Panc1 (cell line): ENCODE measurements at regions of chr18 and their contacts with region 1.

Region 1: DNA sequence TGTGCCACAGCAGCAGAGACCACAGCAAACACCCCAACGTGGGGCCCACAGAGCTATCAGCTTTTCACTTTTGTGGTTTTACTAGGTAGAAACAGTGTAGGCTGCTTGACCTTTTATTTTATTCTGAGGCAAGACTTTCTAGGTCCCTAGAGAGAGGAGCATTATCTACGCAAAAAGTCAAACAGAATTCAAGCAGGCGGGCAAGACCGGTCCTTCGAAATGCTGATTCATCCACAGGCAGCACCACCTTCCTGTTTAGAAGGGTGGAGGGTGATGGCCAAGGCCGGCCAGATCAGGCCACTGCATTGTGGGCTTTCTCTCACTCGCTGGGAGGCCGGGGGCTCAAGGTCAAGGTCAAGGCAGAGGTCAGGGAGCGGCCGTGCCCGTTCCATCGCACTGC is 573.0 kb downstream of the GALR1 start:
- DNase-seq: no peak
- ATAC-seq: no peak
- H3K4me3 ChIP-seq: no peak overlapping the region
- H3K27ac ChIP-seq: no peak overlapping the region
- H3K4me1 ChIP-seq: no peaks in the 10 kb centered on the region
- H3K27me3 ChIP-seq: no peaks in the 10 kb centered on the region
- CTCF ChIP-seq: no peak

Region 2: GRCh38 chr18:77249569-77250500 is 572.8 kb before region 1 on chr18 and contains the start of gene GALR1:
- CTCF ChIA-PET with region 1: no interaction called
- POLR2A ChIA-PET with region 1: no interaction called
- in situ Hi-C with region 1: no loop called
- intact Hi-C with region 1: no loop called
- DNase-seq: no peak
- ATAC-seq: peak; percentile 55
- H3K4me3 ChIP-seq: peak within 1 kb of the TSS; percentile 24 to 50
- H3K27ac ChIP-seq: no peak within 1 kb of the TSS
- H3K4me1 ChIP-seq: peaks cover 3% of the 10 kb centered on the region; the same call in 1 of the 2 replicates
- H3K27me3 ChIP-seq: peaks cover 10% of the 10 kb centered on the region
- CTCF ChIP-seq: no peak
- total RNA-seq, gene GALR1: not detected

Region 3: DNA sequence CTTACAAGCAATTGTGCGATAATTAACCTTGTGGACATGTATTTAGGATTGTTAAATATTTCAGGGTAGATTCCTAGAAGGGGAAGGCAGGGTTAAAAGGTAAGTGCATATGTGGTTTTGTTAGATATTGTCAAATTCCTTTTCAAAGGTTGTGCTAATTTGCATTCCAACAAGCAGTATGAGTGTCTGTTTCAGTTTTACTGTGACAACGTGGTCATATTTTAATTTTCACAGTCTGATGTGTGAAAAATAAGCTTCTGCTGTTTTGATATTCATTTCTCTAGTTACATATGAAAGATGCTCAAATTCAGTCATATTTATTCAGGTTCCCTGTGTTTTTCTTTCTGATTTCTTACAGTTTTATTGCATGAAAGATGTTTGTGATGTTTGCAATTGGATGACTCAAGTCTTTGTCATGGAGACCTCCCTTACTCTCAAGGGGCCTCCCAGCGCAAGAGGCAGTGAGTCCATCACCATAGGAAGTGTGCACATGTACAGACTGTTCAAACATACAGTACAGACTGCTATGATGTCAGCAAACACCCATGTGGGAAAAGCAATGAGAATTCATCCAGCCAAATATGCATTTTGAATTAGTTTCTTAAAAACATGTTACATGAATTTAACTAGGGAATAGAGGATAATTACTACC is 262.2 kb before region 1 on chr18:
- CTCF ChIA-PET with region 1: interaction called, 12 read pairs
- POLR2A ChIA-PET with region 1: no interaction called
- in situ Hi-C with region 1: no loop called
- intact Hi-C with region 1: no loop called
- DNase-seq: peak; percentile 81
- ATAC-seq: peak; percentile 91
- H3K4me3 ChIP-seq: no peak overlapping the region
- H3K27ac ChIP-seq: no peak overlapping the region
- H3K4me1 ChIP-seq: no peaks in the 10 kb centered on the region; the same call in 1 of the 2 replicates
- H3K27me3 ChIP-seq: no peaks in the 10 kb centered on the region
- CTCF ChIP-seq: no peak